ENCODE measurements at regions of chr19 and their contacts with region 1.

Region 1: GRCh38 chr19:35509861-35510625 is 3.4 kb downstream of the DMKN start:
- DNase-seq: peak; percentile 50 to 66 (median 56)
- H3K4me3 ChIP-seq: peak overlapping the region; percentile 22 to 49
- H3K4me3 Mint-ChIP-seq: peak overlapping the region; percentile 57 to 84 (median 80)
- H3K27ac ChIP-seq: no peak overlapping the region
- H3K27ac Mint-ChIP-seq: peak overlapping the region in 4 of 7 donors; percentile 21 to 74 (median 57)
- H3K4me1 ChIP-seq: peaks cover 19% of the 10 kb centered on the region
- H3K4me1 Mint-ChIP-seq: peaks cover 10 to 18% (median 13%) of the 10 kb centered on the region in 4 donors
- H3K27me3 ChIP-seq: no peaks in the 10 kb centered on the region
- H3K27me3 Mint-ChIP-seq: peaks cover 23 to 24% of the 10 kb centered on the region in 2 donors

Region 2: GRCh38 chr19:35495107-35496064 is 14.7 kb before region 1 on chr19:
- CTCF ChIA-PET with region 1: interaction called, 17 read pairs
- POLR2A ChIA-PET with region 1: interaction called, 3 read pairs
- intact Hi-C with region 1: loop called (anchors 1 kb)
- DNase-seq: peak; percentile 59 to 70 (median 63)
- H3K4me3 ChIP-seq: no peak overlapping the region
- H3K4me3 Mint-ChIP-seq: peak overlapping the region in 3 of 8 donors; percentile 38 to 51 (median 39)
- H3K27ac ChIP-seq: no peak overlapping the region
- H3K27ac Mint-ChIP-seq: peak overlapping the region in 3 of 7 donors; percentile 30 to 48 (median 36)
- H3K4me1 ChIP-seq: peaks cover 7% of the 10 kb centered on the region
- H3K4me1 Mint-ChIP-seq: peaks cover 0 to 9% (median 6%) of the 10 kb centered on the region in 4 donors
- H3K27me3 ChIP-seq: no peaks in the 10 kb centered on the region
- H3K27me3 Mint-ChIP-seq: peaks cover 9 to 15% of the 10 kb centered on the region in 2 donors

Region 3: DNA sequence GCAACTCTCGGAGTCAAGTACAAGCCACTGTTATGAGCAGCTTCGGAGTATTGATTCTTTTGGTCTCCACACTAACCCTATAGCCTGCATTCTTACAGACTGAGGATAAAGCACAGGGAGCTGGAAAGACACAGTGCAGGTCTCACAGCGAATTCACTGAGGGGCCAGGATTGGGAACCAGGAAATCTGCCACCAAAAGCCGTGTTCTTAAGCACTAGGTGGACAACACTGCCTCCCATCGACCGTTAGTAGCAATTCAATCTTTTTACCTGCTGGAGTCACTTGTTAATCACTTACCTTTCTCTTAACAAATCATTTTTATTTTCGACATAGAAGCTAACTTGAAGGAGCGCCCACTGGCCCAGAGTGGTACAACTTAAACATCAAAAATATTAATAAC is 82.2 kb after region 1 on chr19:
- CTCF ChIA-PET with region 1: interaction called, 8 read pairs
- POLR2A ChIA-PET with region 1: interaction called, 3 read pairs
- intact Hi-C with region 1: loop called (anchors 1 kb)
- DNase-seq: peak in 4 of 5 donors; percentile 14 to 34 (median 22)
- H3K4me3 ChIP-seq: no peak overlapping the region
- H3K4me3 Mint-ChIP-seq: no peak overlapping the region
- H3K27ac ChIP-seq: no peak overlapping the region
- H3K27ac Mint-ChIP-seq: no peak overlapping the region
- H3K4me1 ChIP-seq: no peaks in the 10 kb centered on the region
- H3K4me1 Mint-ChIP-seq: peaks cover 0 to 2% (median 1%) of the 10 kb centered on the region in 4 donors
- H3K27me3 ChIP-seq: no peaks in the 10 kb centered on the region
- H3K27me3 Mint-ChIP-seq: peaks cover 3 to 4% of the 10 kb centered on the region in 2 donors